B cell (primary cell): ENCODE measurements at regions of chr4 and their contacts with region 1.

Region 1: DNA sequence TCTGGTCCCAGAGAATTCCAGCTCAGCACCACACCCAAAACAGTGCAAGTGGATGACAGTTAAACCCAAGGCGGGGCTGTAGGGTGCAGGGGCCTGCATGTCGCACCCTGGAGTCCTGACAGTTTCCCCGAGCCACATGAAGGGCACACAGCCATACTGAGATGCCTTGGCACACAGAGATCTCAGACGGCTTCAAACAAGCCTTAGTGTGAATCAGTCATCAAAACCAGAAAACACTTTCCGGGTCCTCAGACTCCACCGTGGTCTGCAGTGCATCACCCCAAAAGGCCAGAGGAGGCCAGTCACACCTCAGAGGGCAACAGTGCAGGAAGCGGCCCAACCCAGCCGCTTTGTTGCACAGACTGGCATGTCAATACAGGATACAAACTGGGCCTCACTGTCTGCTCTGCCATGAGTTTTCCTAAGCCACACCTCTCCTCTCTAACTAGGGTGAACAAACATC is 64.6 kb upstream of the ENPP6 start:
- DNase-seq: peak; percentile 62
- ATAC-seq: peak; percentile 72
- H3K4me3 ChIP-seq: no peak overlapping the region
- H3K4me3 Mint-ChIP-seq: peak overlapping the region; percentile 77
- H3K27ac ChIP-seq: peak overlapping the region; percentile 28 to 73
- H3K27ac Mint-ChIP-seq: peak overlapping the region; percentile 90
- H3K4me1 ChIP-seq: peaks cover 48% of the 10 kb centered on the region in 2 donors
- H3K4me1 Mint-ChIP-seq: peaks cover 58% of the 10 kb centered on the region
- H3K27me3 ChIP-seq: no peaks in the 10 kb centered on the region
- H3K27me3 Mint-ChIP-seq: no peaks in the 10 kb centered on the region
- CTCF ChIP-seq: peak; percentile 34

Region 2: GRCh38 chr4:183848805-183849204 is 433.5 kb before region 1 on chr4:
- CTCF ChIA-PET with region 1: no interaction called
- POLR2A ChIA-PET with region 1: no interaction called
- intact Hi-C with region 1: no loop called
- DNase-seq: no peak
- ATAC-seq: no peak
- H3K4me3 ChIP-seq: no peak overlapping the region
- H3K4me3 Mint-ChIP-seq: no peak overlapping the region
- H3K27ac ChIP-seq: no peak overlapping the region
- H3K27ac Mint-ChIP-seq: no peak overlapping the region
- H3K4me1 ChIP-seq: no peaks in the 10 kb centered on the region
- H3K4me1 Mint-ChIP-seq: no peaks in the 10 kb centered on the region
- H3K27me3 ChIP-seq: peaks cover 0 to 11% (median 4%) of the 10 kb centered on the region in 4 experiments
- H3K27me3 Mint-ChIP-seq: peaks cover 32% of the 10 kb centered on the region
- CTCF ChIP-seq: no peak

Region 3: DNA sequence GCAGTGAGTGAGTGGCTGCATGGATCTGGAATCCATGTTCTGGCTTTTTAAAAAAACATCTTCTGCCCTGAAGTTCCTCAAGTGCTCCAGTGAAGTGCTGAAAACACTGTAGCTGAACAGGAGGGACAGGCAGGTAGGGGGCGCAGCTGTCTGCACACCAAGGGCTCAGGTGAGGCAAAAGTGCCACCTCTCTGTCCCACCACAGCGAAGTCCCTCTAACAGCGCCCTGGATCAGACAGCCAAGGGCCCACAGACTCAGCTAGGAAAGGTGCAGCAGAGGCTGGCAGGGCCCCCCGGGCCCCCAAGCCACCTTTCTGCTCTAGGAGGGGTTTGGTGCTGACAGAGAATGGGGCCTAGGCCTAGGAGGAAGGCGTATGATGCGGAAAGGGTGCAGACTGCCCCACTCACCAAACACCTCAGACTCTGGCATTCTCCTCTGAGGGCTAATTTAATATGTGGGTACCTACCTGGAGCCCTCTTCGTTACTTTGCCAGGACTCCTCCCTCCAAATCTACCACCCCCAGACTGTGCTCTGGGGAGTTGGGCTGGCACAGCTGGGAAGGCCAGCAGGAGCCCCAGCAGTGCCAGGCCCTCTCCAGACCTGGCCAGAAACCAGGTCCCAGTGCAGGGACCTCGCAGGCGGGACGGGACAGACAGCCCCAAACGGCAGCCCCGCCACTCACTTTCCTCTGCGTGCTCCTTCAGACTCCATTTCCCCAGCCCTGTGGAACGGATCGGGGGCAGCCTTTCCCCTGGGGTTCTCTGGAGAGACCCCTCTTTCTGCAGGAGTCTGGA is 138.3 kb before region 1 on chr4:
- CTCF ChIA-PET with region 1: no interaction called
- POLR2A ChIA-PET with region 1: no interaction called
- intact Hi-C with region 1: no loop called
- DNase-seq: no peak
- ATAC-seq: no peak
- H3K4me3 ChIP-seq: no peak overlapping the region
- H3K4me3 Mint-ChIP-seq: no peak overlapping the region
- H3K27ac ChIP-seq: no peak overlapping the region
- H3K27ac Mint-ChIP-seq: no peak overlapping the region
- H3K4me1 ChIP-seq: no peaks in the 10 kb centered on the region
- H3K4me1 Mint-ChIP-seq: no peaks in the 10 kb centered on the region
- H3K27me3 ChIP-seq: no peaks in the 10 kb centered on the region
- H3K27me3 Mint-ChIP-seq: peaks cover 24% of the 10 kb centered on the region
- CTCF ChIP-seq: no peak

Region 4: DNA sequence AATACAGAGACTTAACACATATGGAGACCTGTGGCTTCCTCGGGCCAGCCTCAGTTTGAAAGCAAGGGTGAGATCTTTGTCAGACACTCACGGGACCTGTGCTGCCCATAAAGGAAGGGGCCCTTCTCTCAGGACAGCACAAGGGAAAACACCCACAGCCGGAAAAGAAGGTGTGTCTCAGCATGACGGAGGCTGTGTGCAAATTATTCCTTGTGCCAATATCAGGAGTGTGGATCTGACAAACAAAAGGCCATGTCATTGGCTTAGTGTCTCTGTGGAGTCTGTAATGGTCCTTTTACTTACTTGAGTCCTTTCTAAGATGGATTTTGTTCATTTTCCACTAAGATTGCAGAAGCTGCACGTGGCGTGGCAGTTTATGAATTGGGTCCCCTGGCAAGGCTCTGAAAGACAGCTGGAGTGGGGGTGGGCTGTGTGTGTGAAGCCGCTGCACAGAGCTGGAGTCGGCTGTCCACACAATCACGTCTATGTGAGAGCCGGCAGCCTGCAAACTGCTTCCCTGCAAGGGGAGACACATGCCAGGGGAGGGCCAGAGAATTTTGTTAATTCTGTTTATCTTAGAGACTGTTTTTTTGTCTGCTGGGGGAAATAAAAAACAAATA is 66.5 kb before region 1 on chr4:
- CTCF ChIA-PET with region 1: no interaction called
- POLR2A ChIA-PET with region 1: no interaction called
- intact Hi-C with region 1: no loop called
- DNase-seq: no peak
- ATAC-seq: no peak
- H3K4me3 ChIP-seq: no peak overlapping the region
- H3K4me3 Mint-ChIP-seq: no peak overlapping the region
- H3K27ac ChIP-seq: no peak overlapping the region
- H3K27ac Mint-ChIP-seq: no peak overlapping the region
- H3K4me1 ChIP-seq: no peaks in the 10 kb centered on the region
- H3K4me1 Mint-ChIP-seq: no peaks in the 10 kb centered on the region
- H3K27me3 ChIP-seq: peaks cover 0 to 10% (median 3%) of the 10 kb centered on the region in 4 experiments
- H3K27me3 Mint-ChIP-seq: peaks cover 26% of the 10 kb centered on the region
- CTCF ChIP-seq: no peak

Region 5: GRCh38 chr4:184310171-184310567 is 27.9 kb after region 1 on chr4:
- CTCF ChIA-PET with region 1: interaction called, 6 read pairs
- POLR2A ChIA-PET with region 1: interaction called, 5 read pairs
- intact Hi-C with region 1: loop called (anchors 2 kb)
- DNase-seq: peak; percentile 71
- ATAC-seq: peak; percentile 21
- H3K4me3 ChIP-seq: no peak overlapping the region
- H3K4me3 Mint-ChIP-seq: peak overlapping the region; percentile 29
- H3K27ac ChIP-seq: no peak overlapping the region
- H3K27ac Mint-ChIP-seq: peak overlapping the region; percentile 56
- H3K4me1 ChIP-seq: peaks cover 46 to 48% of the 10 kb centered on the region in 2 donors
- H3K4me1 Mint-ChIP-seq: peaks cover 60% of the 10 kb centered on the region
- H3K27me3 ChIP-seq: no peaks in the 10 kb centered on the region
- H3K27me3 Mint-ChIP-seq: no peaks in the 10 kb centered on the region
- CTCF ChIP-seq: peak; percentile 58

Region 6: DNA sequence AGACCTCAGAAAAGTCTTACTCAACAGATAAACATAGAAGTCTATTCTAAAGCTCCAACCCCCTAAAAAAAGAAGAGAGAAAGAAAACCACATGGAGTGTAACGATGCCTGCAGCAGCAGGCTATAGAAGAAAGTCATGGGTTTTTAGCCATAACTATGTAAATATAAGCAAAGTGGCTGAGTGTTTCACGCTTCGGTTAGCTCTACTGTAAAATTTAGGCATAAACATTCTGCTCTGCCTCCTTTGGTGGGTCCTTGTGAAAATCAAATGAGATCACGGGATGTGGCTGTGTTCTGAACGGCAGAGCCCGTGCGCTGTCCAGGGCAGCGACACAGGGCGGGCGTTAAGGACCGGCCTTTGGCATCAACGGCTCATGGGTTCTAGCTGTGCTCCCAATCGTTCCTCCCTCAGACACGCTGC is 113.7 kb after region 1 on chr4:
- CTCF ChIA-PET with region 1: interaction called, 4 read pairs
- POLR2A ChIA-PET with region 1: interaction called, 3 read pairs
- intact Hi-C with region 1: loop called (anchors 1 kb)
- DNase-seq: peak; percentile 87
- ATAC-seq: peak; percentile 90
- H3K4me3 ChIP-seq: peak overlapping the region in 4 of 5 experiments; percentile 10 to 44 (median 15)
- H3K4me3 Mint-ChIP-seq: peak overlapping the region; percentile 89
- H3K27ac ChIP-seq: peak overlapping the region; percentile 9 to 79
- H3K27ac Mint-ChIP-seq: peak overlapping the region; percentile 95
- H3K4me1 ChIP-seq: peaks cover 27 to 35% of the 10 kb centered on the region in 2 donors
- H3K4me1 Mint-ChIP-seq: peaks cover 44% of the 10 kb centered on the region
- H3K27me3 ChIP-seq: no peaks in the 10 kb centered on the region
- H3K27me3 Mint-ChIP-seq: no peaks in the 10 kb centered on the region
- CTCF ChIP-seq: peak; percentile 15